ENCODE measurements at regions of chr2 and their contacts with region 1.

Region 1: DNA sequence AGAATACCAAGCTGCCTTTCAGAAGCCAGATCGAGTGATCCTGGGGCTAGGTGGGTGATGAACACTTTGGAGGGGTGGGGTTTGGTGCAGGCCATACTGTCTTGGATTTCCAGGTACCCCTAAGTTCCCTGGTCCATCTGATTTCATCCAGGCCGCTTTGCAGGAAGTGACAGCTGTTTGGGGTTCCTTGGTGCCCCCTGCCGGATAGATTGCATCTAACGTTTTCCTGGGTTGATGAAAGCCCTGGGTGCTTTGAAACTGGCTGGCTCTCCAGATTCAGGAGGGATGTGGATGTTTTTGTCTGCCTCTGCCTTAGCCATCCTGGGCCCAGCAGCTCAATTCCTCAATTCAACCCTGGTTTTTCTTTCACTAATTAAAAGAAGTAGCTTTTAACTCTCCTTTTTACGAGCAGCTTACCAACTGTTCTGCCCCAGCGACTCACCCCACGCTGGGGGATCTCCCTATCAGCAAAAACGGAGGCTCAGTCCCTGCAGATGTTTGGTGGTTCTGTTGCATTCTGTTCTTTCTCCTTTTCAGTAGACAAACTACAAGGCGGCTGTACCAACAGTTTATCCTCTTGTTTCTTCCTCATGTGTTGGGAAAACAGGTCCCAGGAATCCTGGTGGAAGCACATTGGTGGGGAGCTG is 37.1 kb downstream of the ARHGEF4 start:
- DNase-seq: peak; percentile 14 to 33
- ATAC-seq: peak; percentile 56 to 62
- H3K4me3 ChIP-seq: no peak overlapping the region
- H3K27ac ChIP-seq: no peak overlapping the region
- H3K4me1 ChIP-seq: no peaks in the 10 kb centered on the region
- H3K27me3 ChIP-seq: no peaks in the 10 kb centered on the region
- CTCF ChIP-seq: peak; percentile 17 to 59 (median 30)
- POLR2A ChIP-seq: no peak

Region 2: DNA sequence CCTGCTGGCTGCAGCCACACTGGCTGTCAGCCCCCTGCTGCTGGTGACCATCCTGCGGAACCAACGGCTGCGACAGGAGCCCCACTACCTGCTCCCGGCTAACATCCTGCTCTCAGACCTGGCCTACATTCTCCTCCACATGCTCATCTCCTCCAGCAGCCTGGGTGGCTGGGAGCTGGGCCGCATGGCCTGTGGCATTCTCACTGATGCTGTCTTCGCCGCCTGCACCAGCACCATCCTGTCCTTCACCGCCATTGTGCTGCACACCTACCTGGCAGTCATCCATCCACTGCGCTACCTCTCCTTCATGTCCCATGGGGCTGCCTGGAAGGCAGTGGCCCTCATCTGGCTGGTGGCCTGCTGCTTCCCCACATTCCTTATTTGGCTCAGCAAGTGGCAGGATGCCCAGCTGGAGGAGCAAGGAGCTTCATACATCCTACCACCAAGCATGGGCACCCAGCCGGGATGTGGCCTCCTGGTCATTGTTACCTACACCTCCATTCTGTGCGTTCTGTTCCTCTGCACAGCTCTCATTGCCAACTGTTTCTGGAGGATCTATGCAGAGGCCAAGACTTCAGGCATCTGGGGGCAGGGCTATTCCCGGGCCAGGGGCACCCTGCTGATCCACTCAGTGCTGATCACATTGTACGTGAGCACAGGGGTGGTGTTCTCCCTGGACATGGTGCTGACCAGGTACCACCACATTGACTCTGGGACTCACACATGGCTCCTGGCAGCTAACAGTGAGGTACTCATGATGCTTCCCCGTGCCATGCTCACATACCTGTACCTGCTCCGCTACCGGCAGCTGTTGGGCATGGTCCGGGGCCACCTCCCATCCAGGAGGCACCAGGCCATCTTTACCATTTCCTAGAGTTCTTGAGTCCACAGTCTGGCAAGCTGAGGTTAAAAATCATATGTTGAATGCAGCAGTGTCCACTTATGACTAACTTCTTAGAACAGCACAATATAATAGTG is 144.2 kb before region 1 on chr2:
- in situ Hi-C with region 1: no loop called
- intact Hi-C with region 1: no loop called
- DNase-seq: no peak
- ATAC-seq: no peak
- H3K4me3 ChIP-seq: no peak overlapping the region
- H3K27ac ChIP-seq: no peak overlapping the region
- H3K4me1 ChIP-seq: peaks cover 5 to 11% of the 10 kb centered on the region in 2 donors
- H3K27me3 ChIP-seq: peaks cover 9 to 18% (median 16%) of the 10 kb centered on the region in 3 donors
- CTCF ChIP-seq: no peak
- POLR2A ChIP-seq: no peak

Region 3: DNA sequence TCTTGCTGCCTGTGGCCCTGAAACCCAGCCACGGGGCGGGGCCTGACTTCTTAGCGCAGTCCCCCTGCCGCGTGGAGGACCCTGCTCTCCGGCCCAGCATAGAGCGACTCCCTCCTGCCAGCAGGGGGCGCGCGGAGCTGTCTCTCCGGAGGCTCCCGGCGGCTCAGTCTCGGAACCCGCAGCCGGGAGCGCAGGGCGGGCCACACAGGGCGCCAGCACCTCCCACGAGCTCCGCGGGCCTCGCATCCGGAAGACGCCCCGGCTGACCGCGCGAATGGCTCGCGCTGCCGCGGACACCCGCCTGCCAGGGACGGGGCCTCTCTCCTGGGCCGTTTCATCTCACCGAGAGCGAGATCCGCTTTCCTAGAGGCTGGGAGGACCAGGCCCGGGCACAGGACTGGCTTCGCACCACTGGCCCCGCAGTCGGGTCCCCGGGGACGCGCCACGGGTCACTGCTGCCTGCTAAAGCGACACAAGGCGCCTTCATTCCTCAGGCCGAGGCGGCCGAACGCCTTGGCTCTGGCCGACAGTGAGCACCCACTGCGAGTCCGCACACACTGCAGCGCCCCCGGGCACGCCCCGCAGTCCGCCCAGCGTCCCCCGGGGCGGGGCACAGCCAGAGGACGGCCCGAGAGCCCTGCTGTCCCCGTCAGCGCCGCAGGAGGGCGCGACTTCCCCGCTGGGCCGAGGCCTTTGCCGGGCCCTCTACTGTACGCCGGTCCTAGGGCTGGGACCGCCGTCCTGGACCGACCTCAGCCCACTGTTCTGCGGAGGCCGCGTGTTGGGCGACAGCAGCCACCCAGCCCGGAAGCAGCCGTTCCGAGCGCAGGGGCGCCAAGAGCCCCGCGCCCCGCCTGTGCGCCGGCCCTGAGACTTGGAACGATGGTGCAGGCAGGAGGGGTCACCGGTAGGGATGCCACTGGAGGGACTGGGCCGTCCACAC is 76.1 kb before region 1 on chr2:
- in situ Hi-C with region 1: no loop called
- intact Hi-C with region 1: loop called (anchors 1 kb)
- DNase-seq: peak; percentile 60 to 61
- ATAC-seq: peak; percentile 89 to 91
- H3K4me3 ChIP-seq: peak overlapping the region; percentile 70 to 86 (median 76)
- H3K27ac ChIP-seq: peak overlapping the region; percentile 73 to 79 (median 76)
- H3K4me1 ChIP-seq: peaks cover 0 to 5% of the 10 kb centered on the region in 2 donors
- H3K27me3 ChIP-seq: no peaks in the 10 kb centered on the region
- CTCF ChIP-seq: peak; percentile 66 to 85 (median 71)
- POLR2A ChIP-seq: peak in 1 of 2 donors; percentile 11